ENCODE measurements at regions of chr2 and their contacts with region 1.

Region 1: GRCh38 chr2:236298924-236299475 is 34.8 kb upstream of the ASB18 start:
- DNase-seq: no peak
- H3K4me3 ChIP-seq: no peak overlapping the region
- H3K27ac ChIP-seq: no peak overlapping the region
- H3K4me1 ChIP-seq: no peaks in the 10 kb centered on the region
- H3K27me3 ChIP-seq: peaks cover 70% of the 10 kb centered on the region
- CTCF ChIP-seq: no peak

Region 2: GRCh38 chr2:235183786-235184185 is 1115.2 kb before region 1 on chr2:
- CTCF ChIA-PET with region 1: no interaction called
- POLR2A ChIA-PET with region 1: no interaction called
- intact Hi-C with region 1: no loop called
- DNase-seq: no peak
- H3K4me3 ChIP-seq: no peak overlapping the region
- H3K27ac ChIP-seq: no peak overlapping the region
- H3K4me1 ChIP-seq: no peaks in the 10 kb centered on the region
- H3K27me3 ChIP-seq: no peaks in the 10 kb centered on the region
- CTCF ChIP-seq: no peak

Region 3: GRCh38 chr2:236286873-236287545 is 12.0 kb before region 1 on chr2:
- CTCF ChIA-PET with region 1: no interaction called
- POLR2A ChIA-PET with region 1: no interaction called
- intact Hi-C with region 1: no loop called
- DNase-seq: no peak
- H3K4me3 ChIP-seq: no peak overlapping the region
- H3K27ac ChIP-seq: no peak overlapping the region
- H3K4me1 ChIP-seq: peaks cover 5% of the 10 kb centered on the region
- H3K27me3 ChIP-seq: peaks cover 29% of the 10 kb centered on the region
- CTCF ChIP-seq: no peak

Region 4: GRCh38 chr2:236321415-236321814 is 22.4 kb after region 1 on chr2:
- CTCF ChIA-PET with region 1: no interaction called
- POLR2A ChIA-PET with region 1: interaction called, 11 read pairs
- intact Hi-C with region 1: no loop called
- DNase-seq: no peak
- H3K4me3 ChIP-seq: no peak overlapping the region
- H3K27ac ChIP-seq: no peak overlapping the region
- H3K4me1 ChIP-seq: no peaks in the 10 kb centered on the region
- H3K27me3 ChIP-seq: peaks cover 85% of the 10 kb centered on the region
- CTCF ChIP-seq: no peak

Measured in PC-9 (cell line).